Left ventricle myocardium inferior (tissue), 1 donor: ENCODE measurements at regions of chr19 and their contacts with region 1.

Region 1: GRCh38 chr19:38333245-38333644 is 2.4 kb upstream of the CATSPERG start:
- DNase-seq: no peak
- H3K4me3 ChIP-seq: no peak overlapping the region
- H3K27ac ChIP-seq: no peak overlapping the region
- H3K4me1 ChIP-seq: peaks cover 11% of the 10 kb centered on the region
- H3K27me3 ChIP-seq: no peaks in the 10 kb centered on the region
- CTCF ChIP-seq: no peak

Region 2: DNA sequence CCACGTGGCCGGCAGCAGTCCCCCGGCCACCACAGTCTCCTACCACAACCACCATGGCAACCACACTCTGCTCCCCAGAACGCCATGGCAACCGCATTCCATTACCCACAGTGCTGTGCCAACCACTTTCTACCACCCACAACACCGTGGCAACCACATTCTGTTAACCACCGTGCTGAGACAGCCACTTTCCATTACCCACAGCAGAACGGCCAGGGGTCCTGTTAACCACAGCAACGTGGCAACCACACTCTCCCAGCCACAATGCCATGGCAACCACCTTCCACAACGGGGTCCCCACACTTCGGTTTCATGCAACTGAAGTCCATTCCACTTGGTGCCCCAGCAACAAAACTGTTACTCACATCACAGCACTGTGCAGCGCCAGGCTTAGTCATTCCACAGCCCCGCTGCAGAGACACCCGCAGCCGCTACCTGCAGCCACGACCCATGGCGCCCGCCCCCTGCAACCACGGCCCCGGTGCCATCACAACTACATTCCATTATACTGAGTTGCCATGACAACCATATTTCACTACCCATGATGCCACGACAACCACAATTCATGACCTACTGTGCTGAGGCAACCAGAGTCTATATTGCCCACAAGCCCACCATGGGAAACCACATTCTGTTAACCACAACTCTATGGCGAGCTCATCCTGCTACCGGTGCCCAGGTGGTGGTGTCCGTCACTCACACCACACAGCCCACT is 119.2 kb before region 1 on chr19:
- intact Hi-C with region 1: no loop called
- DNase-seq: no peak
- H3K4me3 ChIP-seq: no peak overlapping the region
- H3K27ac ChIP-seq: no peak overlapping the region
- H3K4me1 ChIP-seq: peaks cover 27% of the 10 kb centered on the region
- H3K27me3 ChIP-seq: peaks cover 94% of the 10 kb centered on the region
- CTCF ChIP-seq: no peak

Region 3: DNA sequence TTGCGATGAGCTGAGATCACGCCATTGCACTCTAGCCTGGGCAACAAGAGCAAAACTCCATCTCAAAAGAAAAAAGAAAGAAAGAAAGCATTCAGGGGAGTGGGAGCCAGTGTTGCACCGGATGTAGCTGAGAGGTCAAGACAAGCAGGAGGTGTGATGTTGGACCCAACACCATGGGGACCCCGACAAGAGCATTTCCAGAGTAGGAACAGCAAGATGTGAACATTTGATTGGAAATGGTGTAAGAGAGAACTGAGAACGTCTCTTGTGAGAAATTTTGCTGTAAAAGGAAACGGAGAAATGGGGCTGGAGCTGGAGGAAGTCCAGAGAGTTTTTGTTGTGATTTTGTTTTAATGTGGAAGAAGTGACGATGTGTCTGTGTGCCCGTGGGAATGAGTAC is 93.4 kb before region 1 on chr19:
- intact Hi-C with region 1: loop called (anchors 5 kb)
- DNase-seq: no peak
- H3K4me3 ChIP-seq: no peak overlapping the region
- H3K27ac ChIP-seq: peak overlapping the region; percentile 44
- H3K4me1 ChIP-seq: peaks cover 16% of the 10 kb centered on the region
- H3K27me3 ChIP-seq: no peaks in the 10 kb centered on the region
- CTCF ChIP-seq: no peak

Region 4: DNA sequence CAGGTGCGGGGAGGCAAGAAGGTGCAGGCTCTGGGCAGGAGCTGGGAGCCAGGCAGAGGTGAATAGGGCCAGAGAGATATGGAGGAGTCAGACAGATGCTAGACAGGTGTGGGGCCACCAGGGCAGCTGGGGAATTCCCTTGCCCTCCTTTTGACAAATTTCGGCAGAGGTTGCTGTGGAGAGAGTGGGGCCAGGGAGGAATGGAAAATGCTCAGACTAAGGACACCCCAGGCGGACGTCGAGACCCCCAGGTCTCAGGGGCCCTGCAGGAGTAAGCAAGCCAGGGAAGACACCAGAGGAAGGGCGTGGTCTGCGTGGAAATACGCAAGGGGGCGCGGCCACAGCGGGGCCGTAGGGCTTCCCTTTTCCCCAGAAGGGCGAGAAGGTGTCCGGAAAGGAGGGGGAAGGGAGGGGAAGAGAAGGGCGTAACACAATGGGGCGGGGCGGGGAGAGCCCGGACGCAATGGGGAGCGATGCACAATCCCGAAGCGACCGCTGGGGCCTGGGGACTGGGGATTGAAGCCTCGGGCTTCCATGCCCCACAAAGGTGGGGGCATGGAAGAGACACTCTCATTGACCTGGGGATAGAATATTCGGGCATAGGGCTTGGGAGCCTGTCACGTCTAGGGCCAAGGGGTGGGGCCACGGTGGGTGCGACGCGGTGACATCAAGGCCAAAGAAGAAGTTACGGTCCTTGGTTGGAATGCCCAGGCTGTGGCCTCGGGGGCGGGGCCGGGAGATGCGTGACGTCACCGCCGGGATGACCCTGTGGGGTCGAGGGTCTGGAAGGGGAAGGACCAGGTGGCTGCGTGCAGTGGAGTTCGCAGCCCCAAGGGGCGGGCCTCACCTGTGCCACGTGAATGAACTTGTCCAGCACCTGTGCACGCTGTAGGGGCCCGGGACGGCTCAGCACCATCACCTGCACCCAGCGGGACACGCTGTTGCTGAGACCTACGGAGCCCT is 84.6 kb after region 1 on chr19:
- intact Hi-C with region 1: no loop called
- DNase-seq: peak; percentile 65
- H3K4me3 ChIP-seq: peak overlapping the region; percentile 58
- H3K27ac ChIP-seq: no peak overlapping the region
- H3K4me1 ChIP-seq: peaks cover 12% of the 10 kb centered on the region
- H3K27me3 ChIP-seq: peaks cover 66% of the 10 kb centered on the region
- CTCF ChIP-seq: no peak